ENCODE measurements at regions of chr11 and their contacts with region 1.

Region 1: GRCh38 chr11:112289588-112290492 is 29.2 kb upstream of the PLET1 start:
- DNase-seq: peak; percentile 89
- ATAC-seq: peak; percentile 92 to 93

Region 2: GRCh38 chr11:112241486-112241885 is 48.4 kb before region 1 on chr11:
- intact Hi-C with region 1: no loop called
- DNase-seq: no peak
- ATAC-seq: peak; percentile 67 to 71

Region 3: DNA sequence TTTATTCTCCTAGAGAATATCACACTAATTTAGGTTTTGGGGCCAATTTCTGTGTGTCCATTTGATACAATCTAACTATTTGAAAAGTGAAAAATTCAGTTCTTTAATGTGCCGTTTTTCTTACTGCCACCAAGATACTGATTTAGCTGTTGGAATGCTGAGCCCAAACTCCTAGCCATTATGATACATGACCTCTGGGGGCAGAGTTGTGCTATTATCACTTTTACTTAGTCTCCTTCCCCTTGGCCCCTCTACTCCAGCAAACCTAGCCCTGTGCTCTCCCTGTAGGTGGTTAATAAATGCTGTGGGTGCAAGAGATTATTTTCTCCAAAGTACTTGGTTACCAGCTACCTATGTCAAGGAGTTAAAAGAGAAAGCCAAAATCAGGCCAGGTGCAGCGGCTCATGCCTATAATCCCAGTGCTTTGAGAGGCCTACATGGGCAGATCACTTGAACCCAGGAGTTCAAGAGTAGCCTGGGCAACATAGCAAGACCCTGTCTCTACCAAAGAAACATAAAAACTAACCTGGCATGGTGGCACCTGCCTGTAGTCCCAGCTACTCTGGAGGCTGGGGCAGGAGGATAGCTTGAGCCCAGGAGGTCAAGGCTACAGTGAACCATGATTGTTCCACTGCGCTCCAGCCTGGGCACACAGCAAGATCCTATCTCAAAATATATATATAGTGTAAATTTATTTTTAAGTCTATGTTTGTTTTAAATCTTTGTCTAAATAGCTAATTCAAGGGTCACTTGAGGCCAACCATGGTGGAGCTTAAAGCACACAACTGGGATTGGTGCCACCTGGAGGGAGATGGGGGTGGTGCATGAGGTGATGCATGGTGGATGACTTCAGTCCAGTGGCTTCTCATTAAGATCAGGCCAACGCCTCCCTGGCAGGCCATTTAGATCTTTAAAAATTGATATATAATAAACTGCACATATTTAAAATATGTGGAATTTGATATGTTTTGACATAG is 164.0 kb after region 1 on chr11:
- intact Hi-C with region 1: loop called in 1 of 2 experiments (anchors 5 kb)
- DNase-seq: peak; percentile 30
- ATAC-seq: peak in 1 of 2 donors; percentile 60

Region 4: GRCh38 chr11:112555491-112556364 is 265.9 kb after region 1 on chr11:
- intact Hi-C with region 1: loop called (anchors 2 to 10 kb)
- DNase-seq: peak; percentile 57
- ATAC-seq: peak; percentile 83 to 85

Measured in left cardiac atrium (tissue), 4 donors.